SK-N-SH (cell line): ENCODE measurements at regions of chr11 and their contacts with region 1.

Region 1: DNA sequence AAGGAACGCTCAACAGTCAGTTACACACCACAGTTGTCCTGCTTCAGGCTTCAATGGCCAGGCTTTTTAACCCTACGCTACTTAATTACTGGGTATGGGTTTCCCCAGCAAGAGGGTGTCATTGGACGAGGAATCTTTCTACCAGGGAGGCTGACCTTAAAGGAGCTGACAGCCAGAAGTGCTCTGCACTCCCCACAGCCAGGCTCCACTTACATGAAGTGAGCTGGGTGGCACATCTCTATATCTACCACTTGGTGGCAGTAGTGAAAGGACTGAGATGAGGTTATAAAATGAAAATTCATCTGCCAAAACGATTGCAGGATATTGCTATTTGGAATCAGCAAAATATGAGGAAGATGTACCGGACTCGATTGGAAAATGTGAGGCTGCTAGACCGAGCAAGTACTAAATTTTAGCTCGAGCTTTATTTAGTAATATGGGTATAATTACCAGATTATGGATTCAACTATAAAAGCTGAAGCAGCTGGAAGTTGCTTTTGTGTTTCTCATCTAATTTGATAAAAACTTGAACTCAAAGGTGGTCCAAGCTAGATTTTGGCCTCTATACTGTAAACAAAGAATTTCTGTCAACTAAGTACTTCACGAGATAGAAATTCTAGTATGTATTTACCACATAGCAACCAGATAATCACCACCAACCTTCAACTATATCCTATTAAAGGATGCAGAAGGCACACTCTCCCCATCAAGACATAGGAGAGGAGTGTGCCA is 53.9 kb upstream of the CEP126 start:
- DNase-seq: peak; percentile 30
- H3K4me3 ChIP-seq: no peak overlapping the region; a peak in 1 of 4 replicates
- H3K27ac ChIP-seq: no peak overlapping the region
- H3K4me1 ChIP-seq: peaks cover 0 to 11% of the 10 kb centered on the region in 2 experiments; a peak in 1 of 4 replicates
- H3K27me3 ChIP-seq: no peaks in the 10 kb centered on the region
- CTCF ChIP-seq: peak; percentile 85
- EP300 ChIP-seq: no peak
- RAD21 ChIP-seq: peak; percentile 73

Region 2: DNA sequence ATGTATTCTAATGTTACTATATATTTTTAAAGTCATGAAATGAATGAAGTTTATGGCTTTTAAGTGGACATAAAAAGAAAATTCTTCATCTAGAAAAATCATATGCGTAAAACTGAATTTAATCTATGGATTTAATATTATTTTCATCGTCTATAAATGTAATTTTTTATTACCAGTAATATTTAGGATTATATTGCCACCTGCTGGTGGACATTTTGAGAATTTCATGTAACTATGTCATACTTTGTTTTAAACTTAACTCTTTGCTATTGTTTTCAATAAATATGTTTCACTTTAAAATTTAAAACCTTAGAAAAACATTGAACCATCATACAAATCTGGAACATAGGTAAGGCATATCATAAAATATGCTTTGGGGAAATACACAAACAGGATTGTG is 12.6 kb before region 1 on chr11:
- CTCF ChIA-PET with region 1: interaction called, 19 read pairs
- POLR2A ChIA-PET with region 1: no interaction called
- DNase-seq: no peak
- H3K4me3 ChIP-seq: no peak overlapping the region
- H3K27ac ChIP-seq: no peak overlapping the region
- H3K4me1 ChIP-seq: no peaks in the 10 kb centered on the region; a peak in 1 of 4 replicates
- H3K27me3 ChIP-seq: no peaks in the 10 kb centered on the region
- CTCF ChIP-seq: peak; percentile 68
- EP300 ChIP-seq: no peak
- RAD21 ChIP-seq: peak; percentile 40; the same call in 1 of the 2 replicates

Region 3: GRCh38 chr11:101880222-101880621 is 19.4 kb after region 1 on chr11:
- CTCF ChIA-PET with region 1: interaction called, 19 read pairs
- POLR2A ChIA-PET with region 1: no interaction called
- DNase-seq: peak; percentile 8
- H3K4me3 ChIP-seq: no peak overlapping the region
- H3K27ac ChIP-seq: no peak overlapping the region
- H3K4me1 ChIP-seq: no peaks in the 10 kb centered on the region
- H3K27me3 ChIP-seq: no peaks in the 10 kb centered on the region
- CTCF ChIP-seq: peak; percentile 67
- EP300 ChIP-seq: no peak
- RAD21 ChIP-seq: peak; percentile 28

Region 4: DNA sequence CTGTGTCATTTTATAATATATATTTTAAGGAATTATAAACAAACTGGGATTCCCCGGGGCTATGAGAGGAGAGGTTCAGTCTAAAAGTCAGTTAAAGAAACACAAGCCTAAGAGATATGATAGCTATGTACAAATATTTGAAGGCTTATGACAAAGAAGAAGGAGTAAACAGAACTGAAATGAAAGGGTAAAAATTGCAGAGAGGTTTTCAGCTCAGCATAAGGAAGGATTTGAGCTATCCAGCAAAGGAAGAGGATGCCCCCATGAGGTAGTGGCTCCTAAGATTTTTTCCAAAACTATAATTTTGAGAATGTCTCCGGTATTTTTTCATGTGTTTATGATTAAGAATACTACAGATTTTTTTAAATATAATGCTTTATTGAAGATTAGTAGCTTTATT is 113.4 kb after region 1 on chr11:
- CTCF ChIA-PET with region 1: interaction called, 39 read pairs
- POLR2A ChIA-PET with region 1: no interaction called
- DNase-seq: no peak
- H3K4me3 ChIP-seq: no peak overlapping the region
- H3K27ac ChIP-seq: no peak overlapping the region
- H3K4me1 ChIP-seq: no peaks in the 10 kb centered on the region
- H3K27me3 ChIP-seq: no peaks in the 10 kb centered on the region
- CTCF ChIP-seq: peak; percentile 52
- EP300 ChIP-seq: no peak
- RAD21 ChIP-seq: peak; percentile 58

Region 5: GRCh38 chr11:101996111-101996510 is 135.2 kb after region 1 on chr11:
- CTCF ChIA-PET with region 1: interaction called, 16 read pairs
- POLR2A ChIA-PET with region 1: no interaction called
- DNase-seq: no peak
- H3K4me3 ChIP-seq: no peak overlapping the region
- H3K27ac ChIP-seq: no peak overlapping the region
- H3K4me1 ChIP-seq: no peaks in the 10 kb centered on the region
- H3K27me3 ChIP-seq: no peaks in the 10 kb centered on the region
- CTCF ChIP-seq: no peak
- EP300 ChIP-seq: no peak
- RAD21 ChIP-seq: no peak

Region 6: GRCh38 chr11:102026212-102026611 is 165.3 kb after region 1 on chr11:
- CTCF ChIA-PET with region 1: interaction called, 16 read pairs
- POLR2A ChIA-PET with region 1: no interaction called
- DNase-seq: no peak
- H3K4me3 ChIP-seq: no peak overlapping the region
- H3K27ac ChIP-seq: no peak overlapping the region
- H3K4me1 ChIP-seq: no peaks in the 10 kb centered on the region
- H3K27me3 ChIP-seq: peaks cover 5% of the 10 kb centered on the region; the same call in 1 of the 2 replicates
- CTCF ChIP-seq: no peak
- EP300 ChIP-seq: no peak
- RAD21 ChIP-seq: no peak